Activated B cell treated with CpG ODN at 0.5 μM for 24 hours (primary cell): ENCODE measurements at regions of chr15 and their contacts with region 1.

Region 1: DNA sequence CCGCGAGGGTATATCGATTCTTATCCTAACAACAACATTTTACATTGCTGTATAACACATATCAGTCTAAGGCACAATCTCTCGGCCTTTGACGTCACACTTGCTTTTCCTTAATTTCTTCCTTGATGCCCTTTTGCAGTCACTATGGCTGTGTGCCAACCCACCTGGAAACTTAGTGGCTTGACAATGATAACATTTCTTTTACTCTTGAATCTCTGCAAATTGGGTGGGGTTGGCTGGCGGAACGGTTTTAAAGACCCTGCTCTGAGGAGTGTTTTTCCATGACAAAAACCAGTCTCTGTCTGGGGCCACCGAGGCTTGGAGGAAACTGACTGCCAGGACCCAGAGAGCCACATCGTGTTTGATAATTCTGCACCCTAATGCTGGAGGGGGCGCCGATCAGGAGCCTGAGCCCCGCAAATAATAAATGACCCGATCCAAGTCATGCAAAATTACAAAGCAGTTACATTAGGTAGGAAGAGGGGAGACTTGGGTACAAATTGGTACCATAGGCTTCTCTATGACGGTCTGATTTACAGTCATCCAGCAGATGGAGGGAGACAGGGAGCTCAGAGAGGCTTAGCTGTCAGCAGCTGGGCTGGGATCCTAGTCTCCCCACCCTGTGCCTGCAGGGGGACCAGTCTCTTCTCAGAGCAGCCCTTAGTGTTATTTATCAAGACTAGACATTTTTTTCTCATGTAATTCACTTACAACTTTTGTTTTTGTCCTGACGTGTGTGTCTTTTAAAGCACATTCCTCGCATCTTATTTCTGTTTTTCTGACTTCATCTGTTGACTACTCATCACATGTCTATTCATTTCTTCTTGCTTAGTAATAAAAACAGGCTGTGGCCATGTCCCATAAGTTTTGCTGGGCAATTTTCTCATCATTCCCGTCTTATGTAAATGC is 115.8 kb downstream of the KLF13 start:
- DNase-seq: no peak
- ATAC-seq: no peak
- H3K4me3 Mint-ChIP-seq: peak overlapping the region; percentile 41
- H3K27ac Mint-ChIP-seq: peak overlapping the region; percentile 20
- H3K4me1 Mint-ChIP-seq: peaks cover 59% of the 10 kb centered on the region
- H3K27me3 Mint-ChIP-seq: no peaks in the 10 kb centered on the region
- CTCF ChIP-seq: no peak

Region 2: GRCh38 chr15:31399544-31400171 is 42.8 kb before region 1 on chr15:
- CTCF ChIA-PET with region 1: no interaction called
- POLR2A ChIA-PET with region 1: no interaction called
- intact Hi-C with region 1: no loop called
- DNase-seq: no peak
- ATAC-seq: no peak
- H3K4me3 Mint-ChIP-seq: no peak overlapping the region
- H3K27ac Mint-ChIP-seq: no peak overlapping the region
- H3K4me1 Mint-ChIP-seq: peaks cover 8% of the 10 kb centered on the region
- H3K27me3 Mint-ChIP-seq: no peaks in the 10 kb centered on the region
- CTCF ChIP-seq: no peak

Region 3: GRCh38 chr15:31458591-31459399 is 16.3 kb after region 1 on chr15:
- CTCF ChIA-PET with region 1: interaction called, 8 read pairs
- POLR2A ChIA-PET with region 1: interaction called, 13 read pairs
- intact Hi-C with region 1: loop called (anchors 2 kb)
- DNase-seq: no peak
- ATAC-seq: peak; percentile 98
- H3K4me3 Mint-ChIP-seq: peak overlapping the region; percentile 64
- H3K27ac Mint-ChIP-seq: peak overlapping the region; percentile 56
- H3K4me1 Mint-ChIP-seq: peaks cover 47% of the 10 kb centered on the region
- H3K27me3 Mint-ChIP-seq: no peaks in the 10 kb centered on the region
- CTCF ChIP-seq: no peak